ENCODE measurements at regions of chr2 and their contacts with region 1.

Region 1: DNA sequence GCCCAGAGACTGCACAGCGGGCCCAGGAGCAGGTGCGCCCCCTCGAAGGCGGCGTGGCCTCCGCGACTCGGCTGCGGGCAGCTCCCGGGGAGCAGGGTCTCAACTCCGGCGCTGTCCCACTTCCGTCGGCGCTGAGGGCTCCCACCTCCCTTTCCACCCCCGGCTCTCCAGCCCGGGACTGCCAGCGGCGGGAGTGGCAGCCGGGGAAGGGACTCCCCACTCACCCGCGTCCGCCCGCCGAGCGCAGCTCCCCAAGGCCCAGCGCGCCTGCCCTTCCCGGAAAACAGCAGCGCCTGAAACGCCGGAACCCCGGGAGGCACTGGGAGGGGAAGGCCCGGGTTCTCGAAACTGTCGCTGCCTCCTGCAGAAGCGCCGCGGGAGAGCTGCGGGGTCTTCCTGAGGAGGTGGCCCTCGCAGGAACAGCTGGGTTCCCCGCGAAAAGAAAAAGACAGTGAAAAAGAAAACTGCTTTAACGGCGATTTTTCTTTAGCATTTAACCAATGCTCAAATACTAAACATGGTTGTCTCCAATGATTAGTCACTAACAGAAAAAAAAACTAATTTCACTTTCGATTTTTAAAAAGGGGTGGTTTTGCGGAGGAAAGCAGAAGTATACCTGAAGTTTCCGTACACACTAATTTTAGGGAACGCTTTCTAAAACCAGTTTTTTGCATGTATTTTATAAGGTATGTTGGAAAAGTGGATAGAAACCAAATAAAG is at the start of gene NMI:
- DNase-seq: peak; percentile 81
- H3K4me3 Mint-ChIP-seq: peak within 1 kb of the TSS; percentile 89
- H3K27ac Mint-ChIP-seq: peak within 1 kb of the TSS; percentile 94
- H3K4me1 Mint-ChIP-seq: peaks cover 41% of the 10 kb centered on the region
- H3K27me3 Mint-ChIP-seq: no peaks in the 10 kb centered on the region
- total RNA-seq, gene NMI: 18.6 to 20.0 TPM

Region 2: GRCh38 chr2:151261231-151261976 is 28.1 kb before region 1 on chr2 and contains the start of gene RBM43:
- CTCF ChIA-PET with region 1: no interaction called
- intact Hi-C with region 1: loop called (anchors 1 kb)
- DNase-seq: peak; percentile 81
- H3K4me3 Mint-ChIP-seq: peak within 1 kb of the TSS; percentile 87
- H3K27ac Mint-ChIP-seq: peak within 1 kb of the TSS; percentile 87
- H3K4me1 Mint-ChIP-seq: peaks cover 18% of the 10 kb centered on the region
- H3K27me3 Mint-ChIP-seq: no peaks in the 10 kb centered on the region
- total RNA-seq, gene RBM43: 3.4 to 3.8 TPM

Region 3: GRCh38 chr2:151409601-151410484 is 120.3 kb after region 1 on chr2 and contains the start of gene RIF1:
- CTCF ChIA-PET with region 1: no interaction called
- intact Hi-C with region 1: loop called (anchors 1 kb)
- DNase-seq: peak; percentile 88
- H3K4me3 Mint-ChIP-seq: peak within 1 kb of the TSS; percentile 100
- H3K27ac Mint-ChIP-seq: peak within 1 kb of the TSS; percentile 95
- H3K4me1 Mint-ChIP-seq: peaks cover 18% of the 10 kb centered on the region
- H3K27me3 Mint-ChIP-seq: no peaks in the 10 kb centered on the region
- total RNA-seq, gene RIF1: 53.0 TPM

Region 4: DNA sequence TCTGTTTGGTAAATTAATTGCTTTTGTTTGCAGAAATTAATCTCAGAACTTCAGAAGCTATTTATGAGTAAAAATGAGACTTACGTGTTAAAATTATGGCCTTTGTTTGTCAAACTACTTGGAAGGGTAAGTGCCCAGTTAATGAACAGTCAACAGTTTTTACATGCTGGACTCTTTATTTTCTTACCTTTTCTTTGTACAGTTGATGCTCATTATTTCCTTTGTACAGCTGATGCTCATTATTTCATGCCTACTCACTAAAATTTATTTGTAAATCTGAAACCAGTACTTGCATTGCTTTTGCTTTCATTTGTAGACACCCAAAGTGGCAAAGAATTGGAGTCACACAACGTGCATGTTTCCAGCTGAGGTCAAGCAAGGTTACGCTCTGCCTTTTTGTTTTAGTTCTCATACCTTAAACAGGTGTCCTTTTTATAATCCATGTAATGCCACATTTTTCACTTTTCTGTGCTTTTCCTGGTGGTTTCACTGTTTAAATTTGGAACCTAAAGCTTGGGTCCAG is 133.4 kb after region 1 on chr2:
- CTCF ChIA-PET with region 1: no interaction called
- intact Hi-C with region 1: loop called (anchors 1 kb)
- DNase-seq: peak; percentile 21
- H3K4me3 Mint-ChIP-seq: no peak overlapping the region
- H3K27ac Mint-ChIP-seq: peak overlapping the region; percentile 77
- H3K4me1 Mint-ChIP-seq: peaks cover 37% of the 10 kb centered on the region
- H3K27me3 Mint-ChIP-seq: no peaks in the 10 kb centered on the region

Region 5: DNA sequence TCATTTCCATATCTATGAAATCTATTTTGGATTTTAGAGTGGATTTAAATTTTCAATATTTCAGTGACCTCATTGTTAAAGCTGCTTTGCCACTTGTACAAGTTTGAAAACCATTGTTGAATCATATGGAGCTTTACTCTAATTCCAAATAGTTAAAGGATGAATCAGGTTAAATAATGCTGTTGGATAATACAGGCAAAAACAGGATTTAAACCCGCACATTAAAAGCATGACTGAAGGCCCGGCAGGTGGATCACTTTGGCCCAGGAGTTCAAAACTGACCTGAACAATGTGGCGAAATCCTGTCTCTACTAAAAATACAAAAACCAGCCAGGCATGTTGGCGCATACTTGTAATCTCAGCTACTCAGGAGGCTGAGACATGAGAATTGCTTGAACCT is 188.5 kb after region 1 on chr2:
- CTCF ChIA-PET with region 1: no interaction called
- intact Hi-C with region 1: loop called (anchors 2 kb)
- DNase-seq: no peak
- H3K4me3 Mint-ChIP-seq: no peak overlapping the region
- H3K27ac Mint-ChIP-seq: no peak overlapping the region
- H3K4me1 Mint-ChIP-seq: peaks cover 18% of the 10 kb centered on the region
- H3K27me3 Mint-ChIP-seq: no peaks in the 10 kb centered on the region

Region 6: DNA sequence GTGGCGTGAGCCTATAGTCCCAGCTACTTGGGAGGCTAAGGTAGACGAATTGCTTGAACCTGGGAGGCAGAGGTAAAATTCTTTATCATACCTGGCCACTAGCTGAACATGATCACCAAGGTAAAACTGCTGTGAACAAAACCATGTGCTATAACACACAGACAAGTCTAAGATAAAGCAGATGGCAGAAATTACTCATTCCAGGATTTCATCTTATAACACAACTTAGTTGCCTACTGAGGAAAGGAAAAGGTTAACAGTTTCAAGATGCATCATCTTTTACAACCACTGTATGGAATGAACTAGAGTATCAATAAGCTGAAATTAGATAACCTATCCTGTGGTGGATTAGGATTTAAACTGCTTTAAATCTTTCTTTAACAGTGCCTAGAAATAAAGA is 530.4 kb after region 1 on chr2:
- CTCF ChIA-PET with region 1: interaction called, 3 read pairs
- intact Hi-C with region 1: loop called (anchors 2 kb)
- DNase-seq: no peak
- H3K4me3 Mint-ChIP-seq: no peak overlapping the region
- H3K27ac Mint-ChIP-seq: no peak overlapping the region
- H3K4me1 Mint-ChIP-seq: peaks cover 56% of the 10 kb centered on the region
- H3K27me3 Mint-ChIP-seq: no peaks in the 10 kb centered on the region

Region 7: GRCh38 chr2:151828143-151828889 is 538.8 kb after region 1 on chr2 and contains the start of gene ARL5A:
- CTCF ChIA-PET with region 1: no interaction called
- intact Hi-C with region 1: loop called (anchors 2 kb)
- DNase-seq: peak; percentile 94
- H3K4me3 Mint-ChIP-seq: peak within 1 kb of the TSS; percentile 95
- H3K27ac Mint-ChIP-seq: peak within 1 kb of the TSS; percentile 82
- H3K4me1 Mint-ChIP-seq: peaks cover 39% of the 10 kb centered on the region
- H3K27me3 Mint-ChIP-seq: no peaks in the 10 kb centered on the region
- total RNA-seq, gene ARL5A: 40.6 to 43.7 TPM

Measured in activated naive CD4-positive, alpha-beta T cell treated with anti-CD3 and anti-CD28 coated beads for 36 hours (primary cell).